ENCODE measurements at regions of chr1 and their contacts with region 1.

Region 1: GRCh38 chr1:11645670-11646265 is 8.5 kb downstream of the FBXO2 start:
- DNase-seq: peak; percentile 86

Region 2: GRCh38 chr1:11272832-11273594 is 372.8 kb before region 1 on chr1 and contains the start of gene UBIAD1:
- in situ Hi-C with region 1: no loop called
- DNase-seq: peak; percentile 88
- total RNA-seq, gene UBIAD1: 10.8 and 16.2 TPM in 2 replicates

Region 3: DNA sequence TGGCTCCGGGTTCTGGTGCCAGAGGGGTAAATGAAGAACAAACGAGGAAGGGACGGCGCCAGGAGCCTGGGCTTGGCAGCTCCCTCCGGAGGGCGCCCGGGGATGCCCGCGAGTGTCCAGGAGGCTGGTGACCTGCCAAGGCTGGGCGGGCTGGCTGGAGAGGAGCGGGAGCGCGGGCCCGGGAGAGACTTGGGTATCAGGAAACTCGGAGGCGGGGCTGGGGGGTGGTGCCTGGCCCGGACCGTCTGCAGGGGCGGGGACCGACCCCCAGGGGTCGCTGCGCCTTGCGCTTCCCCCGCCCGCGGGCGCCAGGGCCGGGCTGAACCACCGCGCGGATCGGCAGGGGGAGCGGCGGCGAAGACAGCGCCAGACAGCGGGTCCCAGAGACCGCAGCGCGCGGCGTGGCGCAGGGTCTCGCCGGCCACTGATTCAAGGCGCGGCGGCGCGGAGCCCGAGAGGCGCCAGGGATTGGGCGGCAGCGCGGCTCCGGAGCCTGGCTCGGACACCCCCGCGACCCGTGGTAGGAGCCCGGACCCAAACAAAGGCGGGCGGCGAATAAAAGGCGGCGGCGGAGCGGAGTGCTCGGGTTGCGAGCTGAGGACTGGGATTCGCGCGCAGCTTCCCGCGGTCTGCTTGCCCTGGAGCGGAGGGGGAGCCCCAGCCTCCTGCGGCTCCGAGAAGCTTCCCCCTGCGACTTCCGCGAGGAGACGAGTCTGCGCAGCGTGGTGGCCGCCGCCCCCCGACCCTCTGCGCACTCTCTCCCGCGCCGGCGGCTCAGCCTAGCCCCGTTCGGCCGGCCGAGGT is 167.0 kb before region 1 on chr1 and contains the start of gene DISP3:
- in situ Hi-C with region 1: loop called (anchors 25 kb)
- DNase-seq: peak; percentile 79
- total RNA-seq, gene DISP3: not detected in 2 replicates

Region 4: DNA sequence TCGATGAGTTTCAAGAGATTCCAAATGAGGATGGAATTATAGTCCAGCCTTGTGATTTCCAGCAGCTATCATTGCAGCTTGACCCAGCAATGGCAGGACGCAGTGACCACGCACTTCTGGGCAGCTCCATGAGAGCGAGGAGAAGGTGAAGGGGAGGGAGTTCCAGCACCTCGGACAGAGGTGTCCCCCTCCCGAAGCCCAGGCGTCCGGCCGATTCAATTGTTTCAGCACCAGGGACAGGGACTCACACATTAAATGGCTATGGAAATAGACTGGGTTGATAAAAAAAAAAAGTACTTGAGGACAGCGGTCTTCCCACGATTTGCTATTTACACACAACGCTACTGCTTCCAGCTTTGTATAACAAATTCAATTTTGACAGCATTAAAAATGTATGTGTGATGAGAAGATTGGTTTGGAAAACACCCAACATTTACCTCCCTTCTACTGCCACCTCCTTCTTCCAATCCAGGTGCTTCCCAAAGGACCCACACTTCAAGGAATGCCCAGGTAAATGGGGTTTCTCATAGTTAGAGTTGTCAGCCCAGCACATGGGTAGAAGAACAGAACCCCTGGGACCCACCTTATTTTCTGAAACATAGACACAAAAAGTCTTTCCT is 95.0 kb before region 1 on chr1:
- in situ Hi-C with region 1: no loop called
- DNase-seq: peak; percentile 25

Measured in G401 (cell line).